ENCODE measurements at regions of chr14 and their contacts with region 1.

Region 1: GRCh38 chr14:73825551-73826188 is 26.0 kb upstream of the PTGR2 start:
- DNase-seq: peak; percentile 20
- ATAC-seq: peak; percentile 88
- H3K4me3 ChIP-seq: no peak overlapping the region
- H3K27ac ChIP-seq: no peak overlapping the region
- H3K4me1 ChIP-seq: peaks cover 11% of the 10 kb centered on the region
- H3K27me3 ChIP-seq: no peaks in the 10 kb centered on the region
- CTCF ChIP-seq: peak; percentile 89 to 95 (median 93)
- EP300 ChIP-seq: no peak
- POLR2A ChIP-seq: no peak
- RAD21 ChIP-seq: peak; percentile 95

Region 2: DNA sequence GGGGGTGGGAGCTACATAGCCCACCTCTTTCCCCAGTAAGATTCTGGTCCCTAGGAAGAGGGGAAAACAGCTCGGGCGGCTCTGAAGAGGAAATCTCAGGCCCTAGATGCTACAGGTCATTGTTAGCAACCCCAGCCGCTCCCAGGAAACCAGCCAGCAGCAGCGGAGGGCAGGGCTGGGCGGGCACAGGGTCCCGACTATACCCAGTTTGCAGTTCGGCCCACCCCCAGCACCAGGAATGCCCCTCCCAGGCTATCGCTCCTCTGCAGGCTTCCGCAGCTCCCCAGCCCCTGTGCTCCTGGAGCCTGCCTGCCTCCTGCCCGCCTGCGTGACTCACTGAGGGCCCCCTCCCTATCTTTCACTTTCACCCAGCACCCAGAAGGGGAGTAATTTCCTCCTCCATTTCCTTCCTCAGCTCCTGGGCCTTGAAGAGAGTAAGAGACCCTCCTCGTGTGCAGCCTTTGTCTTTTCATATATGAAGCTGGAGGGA is 84.2 kb before region 1 on chr14:
- CTCF ChIA-PET with region 1: interaction called, 288 read pairs
- POLR2A ChIA-PET with region 1: interaction called, 8 read pairs
- RAD21 ChIA-PET with region 1: interaction called, 23 read pairs
- SMC1A ChIA-PET with region 1: interaction called, 36 read pairs
- in situ Hi-C with region 1: loop called (anchors 5 kb)
- intact Hi-C with region 1: no loop called
- DNase-seq: no peak
- ATAC-seq: peak; percentile 60
- H3K4me3 ChIP-seq: peak overlapping the region; percentile 55
- H3K27ac ChIP-seq: peak overlapping the region; percentile 81
- H3K4me1 ChIP-seq: peaks cover 55% of the 10 kb centered on the region
- H3K27me3 ChIP-seq: no peaks in the 10 kb centered on the region
- CTCF ChIP-seq: no peak
- EP300 ChIP-seq: no peak
- POLR2A ChIP-seq: no peak
- RAD21 ChIP-seq: no peak

Region 3: DNA sequence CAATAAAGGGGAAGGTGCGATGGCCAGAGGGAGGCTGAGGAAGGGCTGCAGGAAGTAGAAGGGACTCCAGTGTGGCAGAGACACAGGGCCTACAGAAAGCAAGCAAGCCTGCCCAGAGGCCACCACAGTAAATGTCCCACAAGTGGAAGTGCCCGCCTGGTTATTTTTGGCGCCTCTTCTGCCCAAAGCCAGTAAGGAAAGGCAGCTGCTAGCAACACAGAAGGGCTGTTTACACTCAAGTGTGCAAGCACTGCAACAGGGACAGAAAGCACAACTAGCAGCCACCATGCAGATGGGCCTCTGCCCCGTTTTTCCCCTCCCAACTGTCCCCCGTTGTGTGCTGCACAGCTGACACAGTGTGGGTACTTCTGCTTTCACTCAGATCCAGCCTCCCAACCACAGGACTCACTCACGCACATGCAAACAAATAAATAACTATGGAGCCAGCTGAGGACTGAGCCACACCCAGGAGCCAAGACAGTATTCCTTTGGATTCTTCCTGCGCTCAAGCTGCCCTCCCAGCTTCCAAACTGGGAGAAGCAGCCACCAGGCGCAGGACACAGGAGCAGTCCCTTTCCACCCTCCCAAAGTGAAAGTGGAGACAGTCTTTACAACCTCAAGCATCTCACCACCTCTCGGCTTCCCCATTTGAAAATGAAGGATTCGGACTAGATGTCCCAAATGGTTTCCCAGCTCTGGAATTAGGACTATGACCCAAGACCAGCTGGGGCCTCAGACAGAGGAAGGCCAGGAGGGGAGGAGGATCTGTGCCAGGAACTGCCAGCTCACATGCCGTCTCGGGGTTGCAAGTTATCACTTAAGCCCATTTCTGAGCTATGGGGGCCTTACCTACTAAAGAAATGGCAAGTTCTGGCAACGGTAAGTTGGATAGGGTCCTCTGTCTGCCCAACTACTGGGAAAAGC is 71.4 kb before region 1 on chr14:
- CTCF ChIA-PET with region 1: interaction called, 288 read pairs
- POLR2A ChIA-PET with region 1: interaction called, 6 read pairs
- RAD21 ChIA-PET with region 1: interaction called, 48 read pairs
- SMC1A ChIA-PET with region 1: interaction called, 140 read pairs
- in situ Hi-C with region 1: no loop called
- intact Hi-C with region 1: loop called (anchors 1 kb)
- DNase-seq: peak; percentile 61
- ATAC-seq: peak; percentile 53
- H3K4me3 ChIP-seq: peak overlapping the region; percentile 83
- H3K27ac ChIP-seq: peak overlapping the region; percentile 94
- H3K4me1 ChIP-seq: peaks cover 68% of the 10 kb centered on the region
- H3K27me3 ChIP-seq: no peaks in the 10 kb centered on the region
- CTCF ChIP-seq: no peak
- EP300 ChIP-seq: peak; percentile 82 to 84
- POLR2A ChIP-seq: peak; percentile 68
- RAD21 ChIP-seq: no peak

Region 4: DNA sequence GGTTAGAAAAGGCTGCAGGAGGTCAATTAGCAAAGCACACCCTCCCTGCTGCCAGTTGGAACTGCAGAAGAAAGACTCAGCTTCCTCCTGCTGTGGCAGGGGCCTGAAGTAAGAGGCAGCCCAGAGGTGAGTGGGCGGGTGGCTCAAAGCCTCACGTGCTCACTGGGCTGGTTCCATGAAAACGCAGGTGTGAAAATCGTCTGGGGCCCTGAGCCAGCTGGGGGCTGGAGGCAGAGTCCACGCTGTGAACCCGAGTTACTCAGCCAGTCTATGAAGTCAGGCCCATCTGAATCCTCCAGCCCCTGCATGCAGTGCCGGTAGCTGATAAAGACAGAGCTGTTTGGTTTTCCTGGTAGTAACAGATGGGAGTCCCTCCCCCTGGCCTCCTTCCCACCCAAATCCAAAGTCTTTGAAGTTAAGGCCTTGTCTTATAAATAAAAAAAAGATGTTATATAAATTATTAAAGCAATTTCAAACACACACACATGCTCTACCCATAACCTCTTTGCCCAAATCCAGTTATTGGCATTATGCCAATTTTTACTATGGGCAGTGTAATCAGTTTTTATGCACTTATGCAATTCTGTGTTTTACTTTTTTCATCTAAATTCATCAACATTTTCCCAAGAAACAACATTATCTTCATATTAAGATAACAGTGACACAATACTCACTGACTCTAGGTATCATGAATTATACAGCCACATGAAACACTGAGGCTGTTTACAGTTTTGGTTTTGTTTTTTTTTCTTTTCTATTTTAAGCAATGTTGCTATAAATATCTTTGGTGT is 53.6 kb before region 1 on chr14:
- CTCF ChIA-PET with region 1: interaction called, 23 read pairs
- POLR2A ChIA-PET with region 1: no interaction called
- RAD21 ChIA-PET with region 1: interaction called, 13 read pairs
- SMC1A ChIA-PET with region 1: interaction called, 16 read pairs
- in situ Hi-C with region 1: no loop called
- intact Hi-C with region 1: no loop called
- DNase-seq: peak; percentile 85
- ATAC-seq: peak; percentile 76
- H3K4me3 ChIP-seq: peak overlapping the region; percentile 65; the same call in 1 of the 2 replicates
- H3K27ac ChIP-seq: peak overlapping the region; percentile 93
- H3K4me1 ChIP-seq: peaks cover 71% of the 10 kb centered on the region
- H3K27me3 ChIP-seq: no peaks in the 10 kb centered on the region
- CTCF ChIP-seq: peak in 2 of 3 experiments; percentile 0 to 16; a peak in 1 of 6 replicates
- EP300 ChIP-seq: peak; percentile 73 to 81; a peak in 3 of 4 replicates
- POLR2A ChIP-seq: peak; percentile 82
- RAD21 ChIP-seq: no peak

Region 5: DNA sequence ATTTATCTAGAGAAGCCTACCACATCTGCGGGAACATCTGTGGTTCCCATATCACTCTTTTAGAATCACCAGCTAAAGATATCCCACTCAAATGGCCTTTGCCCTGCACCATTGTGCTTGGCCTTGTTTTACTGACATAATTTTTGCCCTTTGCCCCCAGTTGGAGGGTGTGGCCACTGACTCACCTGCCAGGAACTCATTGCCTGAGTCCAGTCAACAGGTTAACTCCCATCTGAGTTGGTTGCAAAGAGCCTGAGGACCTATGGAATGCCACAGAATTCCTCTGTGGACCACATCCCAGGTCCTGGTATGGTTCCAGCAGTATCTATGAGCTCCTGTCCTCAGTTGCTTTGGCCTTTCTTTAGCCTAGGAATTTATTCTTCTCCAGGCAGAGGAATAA is 29.7 kb before region 1 on chr14:
- CTCF ChIA-PET with region 1: interaction called, 9 read pairs
- POLR2A ChIA-PET with region 1: no interaction called
- RAD21 ChIA-PET with region 1: interaction called, 3 read pairs
- SMC1A ChIA-PET with region 1: interaction called, 18 read pairs
- in situ Hi-C with region 1: no loop called
- intact Hi-C with region 1: no loop called
- DNase-seq: no peak
- ATAC-seq: no peak
- H3K4me3 ChIP-seq: no peak overlapping the region
- H3K27ac ChIP-seq: no peak overlapping the region
- H3K4me1 ChIP-seq: peaks cover 15% of the 10 kb centered on the region
- H3K27me3 ChIP-seq: no peaks in the 10 kb centered on the region
- CTCF ChIP-seq: no peak
- EP300 ChIP-seq: no peak
- POLR2A ChIP-seq: no peak
- RAD21 ChIP-seq: no peak

Region 6: DNA sequence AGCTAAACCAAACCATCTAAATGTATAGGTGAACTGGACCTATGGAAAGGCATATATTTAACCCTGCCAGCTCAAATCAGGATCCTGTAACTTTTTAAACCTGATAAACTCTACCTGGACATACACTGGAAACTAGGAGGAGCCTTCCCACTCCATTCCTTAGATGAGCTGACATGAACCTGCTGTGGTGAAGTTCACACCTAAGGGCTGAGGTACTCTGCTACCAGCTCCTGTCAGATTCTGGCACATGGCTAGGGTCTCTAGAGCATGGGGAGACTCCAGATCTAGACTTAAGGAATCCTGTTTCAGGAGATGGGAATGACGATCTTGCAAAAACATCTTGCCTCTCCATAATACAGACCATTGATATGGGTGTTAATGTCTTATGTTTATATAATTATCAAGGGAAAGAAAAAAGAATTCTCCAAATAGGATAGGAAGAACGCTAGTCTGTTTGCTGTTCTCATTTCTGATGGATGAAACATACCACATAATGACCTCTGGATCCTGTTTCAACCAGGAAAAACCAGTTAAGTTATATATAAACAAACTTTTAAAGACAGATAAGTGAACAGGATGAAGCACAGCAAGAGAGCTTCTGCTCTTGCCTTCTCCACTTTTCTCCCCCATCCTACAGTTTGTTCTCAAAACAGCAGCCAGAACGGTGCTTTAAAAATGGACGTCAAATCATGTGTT is 152.1 kb after region 1 on chr14:
- CTCF ChIA-PET with region 1: no interaction called
- POLR2A ChIA-PET with region 1: no interaction called
- RAD21 ChIA-PET with region 1: no interaction called
- SMC1A ChIA-PET with region 1: no interaction called
- in situ Hi-C with region 1: no loop called
- intact Hi-C with region 1: no loop called
- DNase-seq: no peak
- ATAC-seq: no peak
- H3K4me3 ChIP-seq: no peak overlapping the region
- H3K27ac ChIP-seq: no peak overlapping the region
- H3K4me1 ChIP-seq: no peaks in the 10 kb centered on the region
- H3K27me3 ChIP-seq: no peaks in the 10 kb centered on the region
- CTCF ChIP-seq: no peak
- EP300 ChIP-seq: no peak
- POLR2A ChIP-seq: no peak
- RAD21 ChIP-seq: no peak